ENCODE measurements at regions of chr6 and their contacts with region 1.

Region 1: GRCh38 chr6:139146317-139146726 is 11.4 kb downstream of the HECA start:
- DNase-seq: peak; percentile 33
- H3K4me3 Mint-ChIP-seq: peak overlapping the region; percentile 52
- H3K27ac Mint-ChIP-seq: peak overlapping the region; percentile 91
- H3K4me1 Mint-ChIP-seq: peaks cover 90% of the 10 kb centered on the region
- H3K27me3 Mint-ChIP-seq: no peaks in the 10 kb centered on the region

Region 2: GRCh38 chr6:139134817-139135581 is 11.3 kb before region 1 on chr6 and contains the start of gene HECA:
- CTCF ChIA-PET with region 1: interaction called, 14 read pairs
- DNase-seq: peak; percentile 99
- H3K4me3 Mint-ChIP-seq: peak within 1 kb of the TSS; percentile 82
- H3K27ac Mint-ChIP-seq: peak within 1 kb of the TSS; percentile 99
- H3K4me1 Mint-ChIP-seq: peaks cover 69% of the 10 kb centered on the region
- H3K27me3 Mint-ChIP-seq: no peaks in the 10 kb centered on the region

Measured in activated naive CD4-positive, alpha-beta T cell treated with anti-CD3 and anti-CD28 coated beads, Interleukin-2, amount 10 ng/mL, durations not matched to agents 7 days and 5 days (primary cell).